Naive thymus-derived CD8-positive, alpha-beta T cell (primary cell): ENCODE measurements at regions of chr6 and their contacts with region 1.

Region 1: DNA sequence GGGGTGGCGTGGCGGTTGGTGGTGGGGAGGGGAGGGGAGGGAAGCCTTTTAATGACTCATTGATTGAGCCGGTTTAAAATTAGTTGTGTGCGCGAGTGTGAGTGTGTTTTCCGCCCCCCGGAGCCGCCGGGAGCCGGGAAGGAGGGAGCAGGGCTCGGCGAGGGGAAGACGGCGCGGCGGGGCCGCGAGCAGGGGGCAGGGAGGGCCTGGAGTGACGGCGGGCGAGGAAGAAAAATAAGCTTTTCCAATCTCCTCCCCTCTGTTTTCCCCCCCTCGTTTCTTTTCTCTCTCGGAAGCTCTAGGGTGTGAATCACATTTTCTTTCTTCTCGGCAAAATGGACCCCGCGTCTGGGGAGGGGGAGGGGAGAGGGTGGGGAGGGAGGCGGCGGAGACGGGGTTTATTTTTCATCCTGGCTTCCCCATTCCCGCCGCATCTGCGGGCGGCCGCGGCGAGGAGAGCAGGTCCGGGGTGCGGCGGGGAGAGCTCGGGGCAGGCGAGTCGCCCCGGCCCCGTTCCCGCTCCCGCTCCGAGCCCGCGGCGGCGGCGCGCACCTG is 847 bp downstream of the BICRAL start:
- DNase-seq: peak in 9 of 10 donors; percentile 68 to 93 (median 75)
- ATAC-seq: peak; percentile 49 to 61
- H3K4me3 Mint-ChIP-seq: peak overlapping the region in 9 of 10 donors; percentile 95 to 100 (median 99)
- H3K27ac Mint-ChIP-seq: peak overlapping the region in 8 of 10 donors; percentile 98 to 100 (median 100)
- H3K4me1 Mint-ChIP-seq: peaks cover 12 to 30% (median 22%) of the 10 kb centered on the region in 4 donors
- H3K27me3 Mint-ChIP-seq: no peaks in the 10 kb centered on the region

Region 2: DNA sequence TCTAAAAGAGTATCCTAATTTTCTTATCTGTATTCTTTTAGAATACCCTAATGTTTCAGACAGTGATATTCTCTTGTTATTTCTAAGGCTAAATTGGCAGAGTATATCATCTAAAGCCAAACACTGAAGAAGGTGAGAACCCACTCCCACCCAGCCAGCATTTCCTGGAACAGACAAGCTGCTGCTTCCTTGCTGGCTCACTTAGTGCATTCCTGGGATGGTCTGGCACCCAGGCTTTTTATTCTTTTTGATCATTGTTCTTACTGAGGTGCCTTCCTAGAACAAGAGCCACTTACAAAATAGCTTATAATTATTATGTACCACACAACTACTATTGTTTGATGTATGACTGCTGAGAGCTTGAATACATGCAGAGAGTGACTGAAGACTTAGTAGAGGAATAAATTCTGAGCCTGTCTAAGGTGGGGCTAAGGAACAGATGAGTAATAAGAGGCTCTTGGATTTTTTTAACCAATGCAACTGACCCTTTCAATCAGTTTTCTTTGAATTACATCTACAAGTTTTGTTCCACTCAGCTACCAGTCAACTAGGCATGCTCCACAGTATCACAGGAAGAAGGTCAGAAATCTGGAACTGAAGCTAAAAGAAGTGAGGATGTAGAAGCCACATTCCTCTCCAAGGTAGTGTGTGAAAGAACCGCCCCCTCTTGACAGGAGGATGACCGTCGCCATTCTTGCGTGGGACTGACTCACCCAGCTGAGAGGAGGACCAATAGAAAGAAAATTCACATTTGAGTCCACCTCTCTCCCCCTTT is 90.4 kb before region 1 on chr6:
- POLR2A ChIA-PET with region 1: interaction called, 32 read pairs
- DNase-seq: no peak
- ATAC-seq: peak in 1 of 2 donors; percentile 11
- H3K4me3 Mint-ChIP-seq: peak overlapping the region in 3 of 10 donors; percentile 4 to 61 (median 44)
- H3K27ac Mint-ChIP-seq: peak overlapping the region; percentile 48 to 96 (median 90)
- H3K4me1 Mint-ChIP-seq: peaks cover 26 to 55% (median 47%) of the 10 kb centered on the region in 4 donors
- H3K27me3 Mint-ChIP-seq: no peaks in the 10 kb centered on the region

Region 3: DNA sequence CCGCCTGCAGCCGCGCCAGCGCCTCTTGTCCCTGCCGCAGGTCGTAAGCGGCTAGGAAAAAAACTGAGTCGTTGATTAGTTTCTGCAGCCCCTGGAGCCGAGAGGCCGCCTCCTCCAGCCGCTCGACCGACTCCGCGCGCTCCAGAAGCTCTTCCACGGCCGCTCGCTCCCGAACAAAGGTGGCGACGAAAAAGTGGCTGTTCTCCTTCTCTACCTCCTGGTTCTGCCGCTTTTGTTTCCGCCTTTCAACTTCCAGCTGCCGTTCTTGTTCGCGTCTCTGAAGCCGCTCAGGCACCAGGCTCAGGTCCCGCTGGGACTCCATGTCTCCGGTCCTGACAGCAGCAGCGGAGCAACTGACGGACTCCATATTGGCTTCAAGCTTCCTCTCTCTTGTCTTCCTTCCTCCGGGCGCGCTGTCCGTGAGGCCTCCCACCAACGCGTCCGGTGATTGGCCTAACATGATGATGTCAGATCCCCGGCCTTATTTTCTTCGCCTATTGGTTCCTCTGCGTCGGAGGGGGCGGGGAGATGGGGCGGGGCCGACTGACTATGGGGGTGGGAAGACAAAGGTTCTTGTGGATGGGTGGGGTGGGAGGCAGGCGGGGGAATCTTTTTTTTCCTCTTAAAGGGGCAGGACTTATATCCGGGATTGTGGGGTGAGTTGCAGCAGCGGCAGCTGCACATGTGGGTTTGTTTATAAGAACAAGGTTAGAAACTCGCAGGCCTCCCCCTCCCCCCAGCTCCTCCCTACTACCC is 36.8 kb before region 1 on chr6 and contains the start of gene TBCC:
- POLR2A ChIA-PET with region 1: interaction called, 852 read pairs
- DNase-seq: peak; percentile 81 to 98 (median 94)
- ATAC-seq: peak; percentile 70 to 75
- H3K4me3 Mint-ChIP-seq: peak within 1 kb of the TSS; percentile 90 to 100 (median 100)
- H3K27ac Mint-ChIP-seq: peak within 1 kb of the TSS; percentile 99 to 100 (median 100)
- H3K4me1 Mint-ChIP-seq: peaks cover 14 to 45% (median 36%) of the 10 kb centered on the region in 4 donors
- H3K27me3 Mint-ChIP-seq: no peaks in the 10 kb centered on the region
- polyA plus RNA-seq, gene TBCC: 112 to 126 (median 125) TPM

Region 4: GRCh38 chr6:42766141-42766670 is 16.5 kb before region 1 on chr6:
- POLR2A ChIA-PET with region 1: interaction called, 624 read pairs
- DNase-seq: no peak
- ATAC-seq: no peak
- H3K4me3 Mint-ChIP-seq: no peak overlapping the region
- H3K27ac Mint-ChIP-seq: peak overlapping the region in 5 of 10 donors; percentile 11 to 78 (median 34)
- H3K4me1 Mint-ChIP-seq: peaks cover 11 to 51% (median 47%) of the 10 kb centered on the region in 4 donors
- H3K27me3 Mint-ChIP-seq: no peaks in the 10 kb centered on the region

Region 5: GRCh38 chr6:42808492-42809483 is 26.1 kb after region 1 on chr6:
- POLR2A ChIA-PET with region 1: interaction called, 10 read pairs
- DNase-seq: no peak
- ATAC-seq: no peak
- H3K4me3 Mint-ChIP-seq: no peak overlapping the region
- H3K27ac Mint-ChIP-seq: peak overlapping the region in 7 of 10 donors; percentile 12 to 81 (median 57)
- H3K4me1 Mint-ChIP-seq: peaks cover 12 to 22% (median 17%) of the 10 kb centered on the region in 4 donors
- H3K27me3 Mint-ChIP-seq: no peaks in the 10 kb centered on the region

Region 6: GRCh38 chr6:42879372-42880239 is 96.9 kb after region 1 on chr6 and contains the start of gene RPL7L1:
- POLR2A ChIA-PET with region 1: interaction called, 108 read pairs
- DNase-seq: peak; percentile 67 to 93 (median 83)
- ATAC-seq: peak; percentile 92 to 93
- H3K4me3 Mint-ChIP-seq: peak within 1 kb of the TSS; percentile 92 to 100 (median 97)
- H3K27ac Mint-ChIP-seq: peak within 1 kb of the TSS; percentile 98 to 100 (median 100)
- H3K4me1 Mint-ChIP-seq: peaks cover 9 to 37% (median 35%) of the 10 kb centered on the region in 4 donors
- H3K27me3 Mint-ChIP-seq: no peaks in the 10 kb centered on the region
- polyA plus RNA-seq, gene RPL7L1: 65.3 to 87.9 (median 67.4) TPM

Region 7: GRCh38 chr6:42984001-42984923 is 201.6 kb after region 1 on chr6 and contains the start of gene PPP2R5D:
- POLR2A ChIA-PET with region 1: interaction called, 11 read pairs
- DNase-seq: peak; percentile 86 to 99 (median 97)
- ATAC-seq: peak; percentile 93
- H3K4me3 Mint-ChIP-seq: peak within 1 kb of the TSS; percentile 91 to 99 (median 94)
- H3K27ac Mint-ChIP-seq: peak within 1 kb of the TSS; percentile 96 to 99 (median 97)
- H3K4me1 Mint-ChIP-seq: peaks cover 40 to 66% (median 62%) of the 10 kb centered on the region in 4 donors
- H3K27me3 Mint-ChIP-seq: no peaks in the 10 kb centered on the region
- polyA plus RNA-seq, gene PPP2R5D: 11.6 to 29.8 (median 17.6) TPM